ENCODE measurements at regions of chr5 and their contacts with region 1.

Region 1: GRCh38 chr5:91007780-91008402 is 375.2 kb downstream of the ARRDC3 start:
- DNase-seq: no peak

Region 2: DNA sequence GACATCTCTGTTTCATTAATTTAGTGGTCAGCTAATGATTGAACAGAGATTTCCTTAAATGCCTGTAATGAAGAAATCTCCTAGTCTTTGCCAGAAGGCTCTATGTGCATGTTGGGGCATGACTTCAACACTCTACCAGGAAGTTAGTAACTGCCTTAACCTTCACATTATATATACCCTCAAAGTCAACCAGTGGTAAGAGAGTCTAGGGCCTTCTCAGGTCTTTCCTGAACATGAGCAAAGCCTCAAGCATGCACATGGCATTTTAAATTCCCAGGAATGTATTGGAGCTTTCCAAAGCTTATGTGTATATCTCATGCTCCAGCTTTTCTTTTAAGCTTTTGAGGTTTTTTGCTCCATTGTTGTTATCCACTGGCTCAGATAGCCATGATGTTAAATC is 13.1 kb before region 1 on chr5:
- intact Hi-C with region 1: loop called (anchors 1 kb)
- DNase-seq: no peak